WTC11 (cell line): ENCODE measurements at regions of chr18 and their contacts with region 1.

Region 1: DNA sequence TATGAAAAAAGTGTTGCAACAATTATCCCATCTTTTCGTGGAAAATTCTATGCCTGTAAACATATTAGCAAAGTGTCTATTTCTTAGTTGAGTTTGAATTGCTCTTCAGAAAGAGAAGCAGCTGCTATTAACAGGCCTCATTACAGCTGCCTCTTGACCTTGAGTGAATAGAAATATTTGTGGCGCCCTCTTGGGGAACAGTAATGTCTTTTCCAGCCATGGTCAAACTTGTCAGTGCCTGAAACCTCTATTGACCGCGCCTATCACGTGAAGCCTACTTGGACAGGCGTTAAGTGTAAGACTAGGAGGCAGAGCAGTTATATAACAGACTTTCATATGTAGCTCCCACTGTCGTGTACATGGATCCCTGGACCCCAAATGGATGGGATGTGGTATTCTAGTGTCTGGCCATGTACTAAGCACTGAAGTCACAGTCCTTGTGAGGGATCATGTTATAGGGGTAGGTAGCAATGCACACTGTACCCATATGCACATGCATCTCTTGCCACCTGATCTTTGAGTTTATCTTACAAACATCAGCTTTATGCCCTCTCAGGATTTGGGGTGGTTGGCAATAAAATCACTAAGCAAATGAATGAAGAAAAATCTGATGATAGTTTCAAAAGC is 245.0 kb downstream of the PTGR3 start:
- DNase-seq: peak; percentile 21
- ATAC-seq: peak; percentile 95
- H3K4me3 Mint-ChIP-seq: no peak overlapping the region
- H3K27ac Mint-ChIP-seq: no peak overlapping the region
- H3K4me1 Mint-ChIP-seq: peaks cover 20% of the 10 kb centered on the region
- H3K27me3 Mint-ChIP-seq: no peaks in the 10 kb centered on the region
- CTCF ChIP-seq: no peak

Region 2: GRCh38 chr18:74819433-74820059 is 144.4 kb before region 1 on chr18:
- CTCF ChIA-PET with region 1: interaction called, 11 read pairs
- POLR2A ChIA-PET with region 1: no interaction called
- DNase-seq: peak; percentile 76
- ATAC-seq: peak; percentile 100
- H3K4me3 Mint-ChIP-seq: no peak overlapping the region
- H3K27ac Mint-ChIP-seq: no peak overlapping the region
- H3K4me1 Mint-ChIP-seq: peaks cover 4% of the 10 kb centered on the region; the same call in 1 of the 2 replicates
- H3K27me3 Mint-ChIP-seq: no peaks in the 10 kb centered on the region
- CTCF ChIP-seq: peak; percentile 62

Region 3: DNA sequence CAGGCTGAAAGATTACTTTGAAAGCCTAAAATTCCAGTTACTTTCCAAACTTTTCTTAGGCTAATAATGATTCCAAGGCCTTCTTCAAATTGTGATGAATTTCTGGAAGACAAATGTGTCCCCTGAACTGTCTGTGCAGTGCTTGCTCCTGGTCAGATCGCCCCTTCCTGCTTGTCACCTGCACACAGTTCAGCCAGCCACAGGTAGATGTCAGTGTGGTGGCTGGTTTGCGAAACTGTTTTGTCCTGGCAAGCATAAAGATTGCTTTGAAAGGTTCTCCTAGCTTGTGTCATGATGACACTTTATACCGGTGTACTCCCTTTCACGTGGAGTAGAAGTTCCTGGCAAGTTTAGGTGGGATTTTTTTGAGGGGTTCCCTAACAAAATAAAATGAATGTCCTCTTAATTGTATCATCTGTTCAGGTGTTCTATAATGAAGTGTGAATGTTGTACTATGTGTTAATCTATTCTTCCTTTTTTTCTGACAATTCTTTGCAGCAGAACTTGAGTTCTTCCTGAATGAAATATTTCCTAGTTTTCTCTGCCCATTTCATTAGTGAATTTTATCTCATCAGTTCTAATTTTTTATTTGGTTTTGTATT is 67.4 kb before region 1 on chr18:
- CTCF ChIA-PET with region 1: interaction called, 11 read pairs
- POLR2A ChIA-PET with region 1: no interaction called
- DNase-seq: peak; percentile 60
- ATAC-seq: peak; percentile 98
- H3K4me3 Mint-ChIP-seq: no peak overlapping the region
- H3K27ac Mint-ChIP-seq: no peak overlapping the region
- H3K4me1 Mint-ChIP-seq: peaks cover 14% of the 10 kb centered on the region
- H3K27me3 Mint-ChIP-seq: no peaks in the 10 kb centered on the region
- CTCF ChIP-seq: no peak; the same call in 1 of the 2 replicates

Region 4: DNA sequence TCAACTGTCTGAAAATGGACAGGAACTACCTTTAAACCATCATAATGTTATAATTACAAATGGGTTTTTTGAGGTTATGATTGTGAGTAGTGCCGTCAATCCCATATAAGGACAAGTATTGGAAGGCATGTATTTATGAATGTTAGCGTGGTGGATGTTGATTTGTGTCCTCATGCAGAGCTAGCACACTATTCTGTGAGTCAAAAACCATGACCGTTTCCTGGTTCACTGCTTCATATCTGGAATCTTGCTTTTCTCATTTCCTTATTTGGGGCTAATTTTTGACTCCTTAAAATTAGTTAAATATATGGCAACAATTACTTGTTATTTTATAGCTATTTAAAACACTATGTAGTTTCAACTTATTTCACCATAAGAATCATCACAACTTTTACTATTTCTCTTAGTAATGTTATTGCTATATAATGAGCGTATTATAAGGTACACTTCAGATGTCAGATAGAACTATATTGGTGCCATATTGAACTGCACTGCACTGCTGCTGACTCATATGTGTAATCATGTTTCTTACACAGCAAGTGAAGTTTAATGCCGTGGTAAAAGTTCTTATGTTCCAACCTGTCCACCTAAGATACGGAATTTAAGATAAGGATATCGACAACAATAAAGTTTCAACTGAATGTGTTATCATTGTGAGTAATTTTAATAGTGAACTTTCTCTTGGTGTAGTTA is 52.2 kb after region 1 on chr18:
- CTCF ChIA-PET with region 1: no interaction called
- POLR2A ChIA-PET with region 1: no interaction called
- DNase-seq: no peak
- ATAC-seq: no peak
- H3K4me3 Mint-ChIP-seq: no peak overlapping the region
- H3K27ac Mint-ChIP-seq: no peak overlapping the region
- H3K4me1 Mint-ChIP-seq: peaks cover 14% of the 10 kb centered on the region
- H3K27me3 Mint-ChIP-seq: no peaks in the 10 kb centered on the region
- CTCF ChIP-seq: no peak